ENCODE measurements at regions of chr4 and their contacts with region 1.

Region 1: GRCh38 chr4:663438-664428 is 10.3 kb downstream of the ATP5ME start:
- DNase-seq: no peak
- H3K4me3 ChIP-seq: peak overlapping the region; percentile 61 to 87 (median 74)
- H3K27ac ChIP-seq: peak overlapping the region; percentile 8; the same call in 1 of the 2 replicates
- H3K4me1 ChIP-seq: no peaks in the 10 kb centered on the region; a peak in 1 of 7 replicates
- H3K27me3 ChIP-seq: no peaks in the 10 kb centered on the region
- CTCF ChIP-seq: peak in 1 of 3 experiments; percentile 40; a peak in 1 of 4 replicates
- EP300 ChIP-seq: no peak
- POLR2A ChIP-seq: peak in 1 of 2 experiments; percentile 74; a peak in 2 of 3 replicates
- RAD21 ChIP-seq: no peak

Region 2: DNA sequence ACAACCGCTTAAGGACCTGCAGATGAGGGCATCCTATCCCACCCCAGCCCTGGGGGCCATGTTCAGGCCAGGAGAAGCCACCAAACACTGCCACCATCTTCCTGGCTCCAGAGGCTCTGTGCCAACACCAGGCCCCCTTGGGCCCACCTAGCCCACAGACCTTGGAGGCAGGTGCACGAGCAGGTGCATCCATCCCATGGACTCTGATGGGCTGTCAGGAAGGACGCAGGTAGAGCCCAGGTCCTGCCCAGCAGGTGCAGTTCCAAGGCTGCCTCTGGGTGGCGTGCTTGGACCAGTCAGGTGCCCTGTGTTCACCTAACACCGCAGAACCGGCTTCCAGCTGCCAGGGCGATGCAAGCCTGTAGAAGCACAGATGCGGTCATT is 61.2 kb before region 1 on chr4:
- CTCF ChIA-PET with region 1: interaction called, 22 read pairs
- POLR2A ChIA-PET with region 1: no interaction called
- DNase-seq: peak; percentile 76 to 99
- H3K4me3 ChIP-seq: no peak overlapping the region
- H3K27ac ChIP-seq: no peak overlapping the region
- H3K4me1 ChIP-seq: no peaks in the 10 kb centered on the region; a peak in 1 of 7 replicates
- H3K27me3 ChIP-seq: no peaks in the 10 kb centered on the region
- CTCF ChIP-seq: peak; percentile 93 to 100 (median 100)
- EP300 ChIP-seq: no peak
- POLR2A ChIP-seq: no peak
- RAD21 ChIP-seq: peak; percentile 99

Region 3: GRCh38 chr4:674172-675035 is 10.7 kb after region 1 on chr4 and contains the starts of genes ATP5ME and MYL5:
- CTCF ChIA-PET with region 1: interaction called, 11 read pairs
- POLR2A ChIA-PET with region 1: interaction called, 53 read pairs
- DNase-seq: peak; percentile 94 to 99
- H3K4me3 ChIP-seq: peak within 1 kb of the TSS; percentile 75 to 100 (median 84)
- H3K27ac ChIP-seq: peak within 1 kb of the TSS; percentile 72
- H3K4me1 ChIP-seq: peaks cover 2 to 5% (median 4%) of the 10 kb centered on the region in 4 experiments; a peak in 6 of 7 replicates
- H3K27me3 ChIP-seq: no peaks in the 10 kb centered on the region; a peak in 2 of 7 replicates
- CTCF ChIP-seq: peak in 2 of 3 experiments; percentile 87 to 99; a peak in 3 of 4 replicates
- EP300 ChIP-seq: peak in 1 of 2 experiments; percentile 27; a peak in 1 of 3 replicates
- POLR2A ChIP-seq: peak in 1 of 2 experiments; percentile 72; a peak in 2 of 3 replicates
- RAD21 ChIP-seq: peak; percentile 46 to 50; a peak in 3 of 4 replicates
- total RNA-seq, gene ATP5ME: 375 and 413 TPM in 2 replicates
- total RNA-seq, gene MYL5: 5.5 and 5.7 TPM in 2 replicates

Region 4: GRCh38 chr4:683982-684622 is 20.4 kb after region 1 on chr4:
- CTCF ChIA-PET with region 1: interaction called, 4 read pairs
- POLR2A ChIA-PET with region 1: interaction called, 25 read pairs
- DNase-seq: peak in 1 of 2 experiments; percentile 91
- H3K4me3 ChIP-seq: no peak overlapping the region
- H3K27ac ChIP-seq: no peak overlapping the region
- H3K4me1 ChIP-seq: peaks cover 0 to 25% (median 13%) of the 10 kb centered on the region in 4 experiments; a peak in 6 of 7 replicates
- H3K27me3 ChIP-seq: no peaks in the 10 kb centered on the region; a peak in 2 of 7 replicates
- CTCF ChIP-seq: peak in 2 of 3 experiments; percentile 82 to 99; a peak in 3 of 4 replicates
- EP300 ChIP-seq: no peak
- POLR2A ChIP-seq: 0 out of 3 replicates have a peak, but pooled peaks of 1 of the 2 experiments have one; percentile 10
- RAD21 ChIP-seq: peak; percentile 55 to 65

Region 5: DNA sequence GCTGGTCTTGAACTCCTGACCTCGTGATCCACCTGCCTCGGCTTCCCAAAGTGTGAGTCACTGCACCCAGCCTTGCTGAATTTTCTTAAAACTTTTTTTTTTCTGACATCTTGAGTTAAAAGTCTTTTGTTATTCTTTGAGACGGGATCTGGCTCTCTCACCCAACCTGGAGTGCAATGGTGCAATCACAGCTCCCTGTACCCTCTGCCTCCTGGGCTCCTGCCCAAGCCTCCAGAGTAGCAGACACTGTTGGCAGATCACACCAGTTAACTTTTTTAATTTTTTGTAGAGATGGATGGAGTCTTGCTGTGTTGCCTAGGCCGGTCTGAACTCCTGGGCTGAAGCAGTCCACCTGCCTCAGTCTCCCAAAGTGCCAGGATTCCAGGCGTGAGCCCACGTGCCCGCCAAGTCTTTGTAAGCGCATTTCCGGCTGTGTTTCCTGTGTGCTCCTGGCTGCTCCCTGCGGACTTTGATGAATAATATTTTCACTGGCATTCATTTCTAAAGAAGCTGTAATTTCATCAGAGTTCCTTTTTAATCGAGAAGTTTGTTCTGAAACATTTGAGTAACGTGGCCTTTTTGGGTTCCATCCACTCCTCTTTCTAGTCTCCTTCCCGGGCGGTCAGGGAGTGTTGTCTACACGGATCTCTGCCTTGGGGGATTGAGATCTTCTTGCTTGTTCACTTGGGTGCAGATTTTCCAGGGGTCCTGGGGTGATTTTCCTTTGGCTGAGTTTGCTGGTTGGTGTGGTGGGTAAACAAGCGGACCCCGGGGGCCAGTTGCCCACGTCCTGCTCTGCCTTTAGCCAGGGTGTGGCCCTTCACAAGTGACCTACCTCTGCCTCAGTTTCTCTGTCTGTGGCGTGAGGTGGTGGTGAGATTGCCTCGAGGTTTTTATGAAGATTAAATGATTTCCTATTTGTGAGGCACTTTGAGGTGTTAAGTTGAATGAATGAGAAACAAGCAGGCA is 86.2 kb after region 1 on chr4:
- CTCF ChIA-PET with region 1: no interaction called
- POLR2A ChIA-PET with region 1: no interaction called
- DNase-seq: no peak
- H3K4me3 ChIP-seq: no peak overlapping the region
- H3K27ac ChIP-seq: no peak overlapping the region
- H3K4me1 ChIP-seq: no peaks in the 10 kb centered on the region
- H3K27me3 ChIP-seq: no peaks in the 10 kb centered on the region
- CTCF ChIP-seq: no peak
- EP300 ChIP-seq: no peak
- POLR2A ChIP-seq: no peak
- RAD21 ChIP-seq: no peak

Measured in H1 (cell line).